SK-N-SH (cell line): ENCODE measurements at regions of chr5 and their contacts with region 1.

Region 1: DNA sequence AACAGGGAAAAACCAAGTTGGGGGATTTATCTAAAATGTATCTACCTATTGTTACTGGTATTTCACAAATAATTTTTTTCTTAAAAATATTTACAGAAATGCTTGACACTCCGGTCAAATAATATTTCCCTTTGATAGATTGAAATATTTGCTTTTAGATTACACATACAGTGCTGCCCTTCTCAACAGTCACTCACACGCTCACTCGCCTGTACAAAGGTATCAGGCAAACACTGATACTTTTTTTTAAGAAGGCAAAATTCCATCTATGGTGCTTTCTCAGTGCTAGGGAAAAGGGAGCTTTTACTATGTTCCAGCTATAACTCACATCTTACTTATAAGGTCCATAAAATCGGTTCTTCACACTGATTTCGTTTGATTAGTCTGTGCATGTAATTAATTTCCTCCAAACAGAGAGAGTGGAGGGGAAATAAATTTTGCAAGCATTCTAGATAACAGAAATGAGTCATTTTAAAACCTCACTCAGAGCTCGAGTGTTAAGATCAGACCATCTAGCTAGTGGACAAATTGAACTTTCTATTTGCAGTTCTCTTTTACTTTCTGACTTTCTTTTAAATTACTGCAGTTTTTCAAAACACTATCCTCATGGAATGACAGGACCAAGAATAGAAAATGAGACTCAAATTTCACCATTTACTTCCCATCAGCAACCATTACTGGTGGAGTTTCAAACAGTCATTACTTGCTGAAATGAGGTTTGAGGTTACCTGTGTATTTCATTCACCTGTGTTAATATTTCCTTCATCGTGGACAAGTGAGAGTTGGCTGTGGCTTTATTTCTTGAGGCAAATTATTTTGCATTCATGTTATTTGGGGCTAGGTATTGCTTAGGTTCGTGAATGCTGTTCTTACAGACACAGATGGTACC is 273.2 kb downstream of the RAB3C start:
- DNase-seq: no peak
- H3K4me3 ChIP-seq: no peak overlapping the region
- H3K27ac ChIP-seq: no peak overlapping the region
- H3K4me1 ChIP-seq: no peaks in the 10 kb centered on the region
- H3K27me3 ChIP-seq: 0 out of 2 replicates have a peak, but pooled peaks cover 8% of the 10 kb centered on the region
- CTCF ChIP-seq: no peak
- EP300 ChIP-seq: no peak
- RAD21 ChIP-seq: no peak

Region 2: GRCh38 chr5:58751222-58751837 is 104.8 kb before region 1 on chr5:
- CTCF ChIA-PET with region 1: no interaction called
- POLR2A ChIA-PET with region 1: no interaction called
- DNase-seq: peak; percentile 4
- H3K4me3 ChIP-seq: no peak overlapping the region
- H3K27ac ChIP-seq: 0 out of 4 replicates have a peak overlapping the region, but pooled peaks of 1 of the 2 experiments have one; percentile 7
- H3K4me1 ChIP-seq: peaks cover 0 to 10% of the 10 kb centered on the region in 2 experiments; a peak in 2 of 4 replicates
- H3K27me3 ChIP-seq: no peaks in the 10 kb centered on the region
- CTCF ChIP-seq: no peak
- EP300 ChIP-seq: peak in 1 of 2 experiments; percentile 21; a peak in 1 of 4 replicates
- RAD21 ChIP-seq: no peak

Region 3: GRCh38 chr5:58871648-58872242 is 15.7 kb after region 1 on chr5:
- CTCF ChIA-PET with region 1: interaction called, 11 read pairs
- POLR2A ChIA-PET with region 1: no interaction called
- DNase-seq: peak; percentile 26
- H3K4me3 ChIP-seq: no peak overlapping the region; a peak in 1 of 4 replicates
- H3K27ac ChIP-seq: no peak overlapping the region
- H3K4me1 ChIP-seq: peaks cover 0 to 4% of the 10 kb centered on the region in 2 experiments; a peak in 1 of 4 replicates
- H3K27me3 ChIP-seq: no peaks in the 10 kb centered on the region
- CTCF ChIP-seq: peak; percentile 73
- EP300 ChIP-seq: no peak
- RAD21 ChIP-seq: peak; percentile 47

Region 4: GRCh38 chr5:58912116-58912515 is 56.0 kb after region 1 on chr5:
- CTCF ChIA-PET with region 1: no interaction called
- POLR2A ChIA-PET with region 1: no interaction called
- DNase-seq: no peak
- H3K4me3 ChIP-seq: no peak overlapping the region
- H3K27ac ChIP-seq: no peak overlapping the region
- H3K4me1 ChIP-seq: no peaks in the 10 kb centered on the region
- H3K27me3 ChIP-seq: no peaks in the 10 kb centered on the region
- CTCF ChIP-seq: no peak
- EP300 ChIP-seq: no peak
- RAD21 ChIP-seq: no peak

Region 5: DNA sequence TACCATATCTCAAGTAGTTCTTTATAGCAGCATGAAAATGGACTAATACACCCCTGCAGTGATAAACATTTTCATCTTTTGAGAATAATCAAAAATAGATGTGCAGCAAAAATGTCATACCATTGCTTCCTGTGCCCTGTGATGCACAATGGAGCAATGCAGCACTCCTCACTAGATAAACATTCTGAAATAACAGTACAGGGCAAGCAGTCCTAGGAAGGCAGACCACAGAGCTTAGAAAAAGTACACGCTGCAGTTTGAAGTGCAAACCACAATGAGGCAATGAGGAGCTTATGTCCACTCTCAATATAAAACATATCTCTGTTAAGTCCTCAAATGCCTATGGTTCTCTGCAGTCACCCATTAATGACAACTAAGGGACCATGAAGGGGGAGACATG is 669.9 kb after region 1 on chr5:
- CTCF ChIA-PET with region 1: no interaction called
- POLR2A ChIA-PET with region 1: no interaction called
- DNase-seq: no peak
- H3K4me3 ChIP-seq: no peak overlapping the region
- H3K27ac ChIP-seq: peak overlapping the region in 1 of 2 experiments; percentile 20; a peak in 1 of 4 replicates
- H3K4me1 ChIP-seq: peaks cover 0 to 6% of the 10 kb centered on the region in 2 experiments; a peak in 2 of 4 replicates
- H3K27me3 ChIP-seq: no peaks in the 10 kb centered on the region
- CTCF ChIP-seq: peak; percentile 43
- EP300 ChIP-seq: no peak
- RAD21 ChIP-seq: no peak